ENCODE measurements at regions of chr5 and their contacts with region 1.

Region 1: DNA sequence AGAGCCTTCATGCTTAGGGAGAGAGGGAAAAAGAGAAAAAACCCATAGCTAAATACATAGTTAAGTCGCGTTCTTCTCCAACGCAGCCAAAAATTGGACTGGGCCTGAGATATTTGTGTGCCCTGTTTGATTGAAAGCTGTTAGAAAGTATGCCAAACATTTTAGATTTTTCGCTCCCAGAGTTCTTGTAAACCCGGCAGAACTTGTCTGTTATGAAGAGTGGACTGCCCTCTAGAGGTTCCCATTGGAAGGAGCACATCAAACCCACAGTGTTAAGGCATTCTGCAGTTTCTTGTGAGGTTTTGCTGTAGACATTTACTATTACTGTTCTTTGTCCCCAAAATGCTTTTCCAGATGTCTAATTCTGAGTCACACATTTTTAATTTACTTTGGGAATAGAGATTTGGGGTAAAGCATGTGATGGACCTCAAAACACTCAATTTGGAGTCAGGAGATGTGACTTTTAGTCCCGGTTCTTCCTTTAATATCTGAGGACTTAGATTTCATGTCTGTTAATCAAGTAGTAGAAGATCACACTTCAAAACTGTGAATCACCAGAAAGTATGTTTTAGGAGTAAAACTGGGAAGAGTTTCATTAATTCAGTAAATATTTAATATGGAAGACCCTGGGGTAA is 96.6 kb downstream of the PCSK1 start:
- DNase-seq: peak; percentile 36
- H3K4me3 ChIP-seq: no peak overlapping the region
- H3K27ac ChIP-seq: peak overlapping the region; percentile 19 to 49; a peak in 3 of 4 replicates
- H3K4me1 ChIP-seq: peaks cover 0 to 18% of the 10 kb centered on the region in 2 experiments; a peak in 2 of 4 replicates
- H3K27me3 ChIP-seq: no peaks in the 10 kb centered on the region
- CTCF ChIP-seq: peak; percentile 94
- EP300 ChIP-seq: no peak
- RAD21 ChIP-seq: peak; percentile 95

Region 2: DNA sequence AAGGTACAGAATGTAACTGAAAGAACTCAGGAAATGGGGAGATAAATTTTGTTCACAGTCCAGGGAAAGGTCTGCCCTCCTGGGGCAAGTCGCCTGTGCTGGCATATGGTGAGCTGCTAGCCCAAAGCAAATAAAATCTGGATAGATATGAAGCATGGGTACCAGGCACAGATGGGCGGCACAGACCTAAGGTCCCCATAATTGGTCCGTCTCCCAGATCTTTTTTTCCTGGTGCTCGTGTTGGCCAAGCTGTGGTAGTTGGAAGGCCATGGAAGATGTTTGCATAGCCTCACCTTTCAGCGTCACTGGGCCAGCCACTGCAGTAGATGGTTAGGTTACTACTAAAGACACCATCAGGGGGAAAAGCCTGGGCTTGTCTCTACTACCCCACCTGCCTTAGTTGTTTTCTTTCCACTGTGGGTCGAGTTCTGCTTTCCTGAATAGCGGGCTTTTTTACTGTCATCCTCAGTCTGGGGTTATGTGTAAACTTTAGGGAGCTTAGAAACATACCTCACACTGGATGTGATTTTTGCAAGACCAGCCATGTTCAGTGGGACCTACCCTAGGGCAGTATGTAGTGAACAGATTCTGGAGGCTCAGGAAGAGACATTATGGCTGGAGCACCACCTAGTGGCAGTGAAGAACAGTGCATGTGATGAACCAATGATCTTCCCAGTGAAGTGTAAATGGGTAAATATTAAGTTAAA is 489.8 kb before region 1 on chr5:
- CTCF ChIA-PET with region 1: interaction called, 47 read pairs
- POLR2A ChIA-PET with region 1: no interaction called
- DNase-seq: peak; percentile 83
- H3K4me3 ChIP-seq: no peak overlapping the region; a peak in 1 of 4 replicates
- H3K27ac ChIP-seq: no peak overlapping the region
- H3K4me1 ChIP-seq: peaks cover 3 to 7% of the 10 kb centered on the region in 2 experiments; a peak in 2 of 4 replicates
- H3K27me3 ChIP-seq: no peaks in the 10 kb centered on the region
- CTCF ChIP-seq: peak; percentile 97
- EP300 ChIP-seq: no peak
- RAD21 ChIP-seq: peak; percentile 98

Region 3: DNA sequence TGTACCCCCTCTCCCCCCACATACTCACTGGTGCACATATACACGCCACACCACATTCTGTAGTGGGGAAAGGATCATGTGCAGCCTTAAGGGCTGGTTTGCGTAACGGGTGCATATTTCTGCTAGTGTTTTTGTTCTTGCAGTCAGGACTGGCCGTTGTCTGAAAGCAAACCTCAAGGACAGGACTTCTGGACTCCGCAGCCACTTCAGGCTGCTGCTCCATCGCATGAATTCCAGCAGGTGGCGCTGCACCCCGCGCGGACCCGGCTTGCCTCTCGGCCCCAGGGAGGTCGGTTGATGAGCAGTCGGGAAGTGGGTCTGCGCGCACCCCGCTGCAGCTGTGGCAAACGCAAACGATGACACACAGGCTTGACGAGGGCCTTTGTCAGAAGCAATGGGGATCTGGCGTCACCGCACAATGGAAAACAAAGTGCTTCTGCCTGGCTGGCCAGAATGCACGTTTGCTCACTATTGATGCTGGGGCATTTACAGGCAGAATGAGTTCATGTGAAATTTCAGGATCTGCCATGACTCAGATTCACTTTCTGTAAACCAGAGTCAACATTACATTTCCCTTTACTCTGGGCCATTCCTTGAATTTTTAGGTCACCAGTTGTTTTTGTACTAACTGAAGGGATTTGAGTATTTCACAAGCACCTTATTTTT is 477.7 kb before region 1 on chr5:
- CTCF ChIA-PET with region 1: interaction called, 157 read pairs
- POLR2A ChIA-PET with region 1: no interaction called
- DNase-seq: peak; percentile 93
- H3K4me3 ChIP-seq: peak overlapping the region; percentile 36 to 45
- H3K27ac ChIP-seq: peak overlapping the region; percentile 71 to 95
- H3K4me1 ChIP-seq: peaks cover 2 to 35% of the 10 kb centered on the region in 2 experiments; a peak in 3 of 4 replicates
- H3K27me3 ChIP-seq: no peaks in the 10 kb centered on the region
- CTCF ChIP-seq: peak; percentile 98
- EP300 ChIP-seq: peak in 1 of 2 experiments; percentile 80; a peak in 1 of 4 replicates
- RAD21 ChIP-seq: peak; percentile 97

Region 4: DNA sequence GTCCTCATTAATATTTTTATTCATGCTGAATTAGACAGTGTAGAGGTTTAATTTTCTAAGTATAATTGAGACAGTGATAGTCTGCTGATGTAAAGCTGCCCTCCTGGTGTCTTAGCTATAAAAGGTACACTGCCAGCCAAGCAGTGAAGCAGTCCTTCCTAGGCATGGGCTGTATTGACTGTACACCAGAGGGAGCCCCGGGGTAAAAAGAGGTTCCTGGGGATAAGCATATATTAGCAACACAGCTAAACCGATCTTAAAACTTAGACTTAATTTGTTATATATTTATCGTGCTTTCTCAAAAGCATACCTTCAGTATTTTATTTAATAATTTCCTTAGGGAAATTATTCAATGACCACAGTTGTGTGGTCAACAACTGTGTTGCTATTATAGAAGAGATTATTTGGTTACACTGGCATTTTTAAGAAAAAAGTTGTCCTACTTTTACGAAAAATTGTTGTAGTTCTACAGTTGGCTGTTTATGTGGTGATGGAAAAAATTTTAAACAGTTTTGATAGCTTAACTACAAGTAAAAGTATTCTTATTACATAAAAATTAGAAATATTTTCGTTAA is 443.6 kb before region 1 on chr5:
- CTCF ChIA-PET with region 1: interaction called, 10 read pairs
- POLR2A ChIA-PET with region 1: no interaction called
- DNase-seq: peak; percentile 33
- H3K4me3 ChIP-seq: no peak overlapping the region
- H3K27ac ChIP-seq: no peak overlapping the region
- H3K4me1 ChIP-seq: peaks cover 0 to 2% of the 10 kb centered on the region in 2 experiments; a peak in 2 of 4 replicates
- H3K27me3 ChIP-seq: no peaks in the 10 kb centered on the region
- CTCF ChIP-seq: peak; percentile 57
- EP300 ChIP-seq: no peak
- RAD21 ChIP-seq: peak; percentile 56

Region 5: DNA sequence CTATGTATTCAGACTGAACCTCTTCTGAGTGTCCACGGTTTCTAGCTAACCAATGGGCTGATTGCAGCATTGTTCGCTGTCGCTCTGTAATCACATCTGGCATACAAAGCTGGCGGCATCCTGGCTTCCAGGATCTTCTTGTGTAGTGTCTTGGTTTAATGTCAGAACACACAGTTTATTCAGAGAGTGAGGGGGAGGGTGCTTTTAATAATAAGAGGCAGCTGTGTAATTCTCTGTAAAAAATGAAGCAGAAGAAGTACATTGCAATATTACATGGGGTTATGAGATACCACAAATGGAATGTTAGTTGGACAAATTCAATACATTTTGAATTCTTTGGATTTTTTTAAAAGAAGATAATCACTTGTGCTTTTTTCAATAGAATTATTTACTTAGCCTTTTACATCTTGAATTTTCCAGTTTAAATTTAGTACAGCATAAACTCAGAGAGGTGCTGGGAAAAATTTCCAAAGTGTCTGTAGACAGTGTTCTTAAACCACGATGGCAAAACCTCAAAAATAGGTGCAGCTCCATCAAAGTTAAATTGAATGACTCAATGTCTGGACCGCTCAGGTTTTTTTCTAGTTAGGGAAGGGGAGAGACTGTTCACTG is 109.4 kb before region 1 on chr5:
- CTCF ChIA-PET with region 1: no interaction called
- POLR2A ChIA-PET with region 1: no interaction called
- DNase-seq: no peak
- H3K4me3 ChIP-seq: peak overlapping the region in 1 of 2 experiments; percentile 21; a peak in 1 of 4 replicates
- H3K27ac ChIP-seq: peak overlapping the region; percentile 86 to 88
- H3K4me1 ChIP-seq: peaks cover 0 to 8% of the 10 kb centered on the region in 2 experiments; a peak in 1 of 4 replicates
- H3K27me3 ChIP-seq: no peaks in the 10 kb centered on the region
- CTCF ChIP-seq: no peak
- EP300 ChIP-seq: peak in 1 of 2 experiments; percentile 93; a peak in 2 of 4 replicates
- RAD21 ChIP-seq: no peak

Region 6: DNA sequence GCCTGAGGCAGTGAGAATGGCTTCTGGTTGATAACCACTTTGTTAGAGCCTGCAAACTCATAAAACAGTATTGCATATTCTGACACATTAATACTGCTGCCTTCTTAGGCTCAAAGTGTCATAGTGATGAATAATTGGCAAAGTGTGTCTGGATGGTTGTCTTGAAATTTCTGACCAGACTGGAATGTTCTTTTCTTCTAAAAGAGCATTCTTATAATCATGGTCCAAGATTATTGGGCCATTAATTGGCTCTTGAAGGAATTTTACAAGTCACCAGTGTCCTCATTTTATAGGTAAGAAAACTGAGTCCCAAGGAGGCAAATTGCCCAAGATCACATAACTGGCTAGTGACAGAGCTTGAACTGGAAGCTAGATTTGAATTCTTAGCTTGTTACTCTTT is 15.1 kb before region 1 on chr5:
- CTCF ChIA-PET with region 1: interaction called, 17 read pairs
- POLR2A ChIA-PET with region 1: no interaction called
- DNase-seq: no peak
- H3K4me3 ChIP-seq: no peak overlapping the region
- H3K27ac ChIP-seq: peak overlapping the region in 1 of 2 experiments; percentile 35; a peak in 2 of 4 replicates
- H3K4me1 ChIP-seq: peaks cover 0 to 24% of the 10 kb centered on the region in 2 experiments
- H3K27me3 ChIP-seq: no peaks in the 10 kb centered on the region
- CTCF ChIP-seq: no peak
- EP300 ChIP-seq: no peak
- RAD21 ChIP-seq: no peak

Measured in SK-N-SH (cell line).